GM10248 (cell line): ENCODE measurements at regions of chr3 and their contacts with region 1.

Region 1: DNA sequence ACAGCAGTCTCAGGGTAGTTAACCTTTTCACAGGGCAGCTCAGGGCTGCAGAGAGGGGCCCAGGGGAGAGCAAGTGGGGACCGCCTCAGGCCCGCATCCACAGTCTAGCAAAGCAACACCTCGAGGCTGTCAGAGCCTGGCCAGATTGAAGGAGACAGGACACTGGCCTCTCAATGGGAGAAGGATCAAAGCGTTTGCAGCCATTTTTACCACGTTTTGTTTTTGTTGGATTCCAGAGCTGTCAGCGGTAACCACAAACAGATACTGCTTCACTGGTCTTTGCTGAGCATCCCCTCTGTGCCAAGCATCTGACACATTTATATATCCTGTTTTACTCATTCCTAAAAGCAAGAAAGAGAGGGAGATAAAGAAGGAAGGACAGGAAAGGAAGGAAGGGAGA is 153.8 kb downstream of the SHQ1 start:
- DNase-seq: no peak
- CTCF ChIP-seq: no peak

Region 2: GRCh38 chr3:72679540-72680198 is 14.7 kb before region 1 on chr3:
- CTCF ChIA-PET with region 1: interaction called, 11 read pairs
- POLR2A ChIA-PET with region 1: no interaction called
- DNase-seq: no peak
- CTCF ChIP-seq: no peak